H1 (cell line): ENCODE measurements at regions of chr17 and their contacts with region 1.

Region 1: GRCh38 chr17:44829523-44830358 is at the start of gene GJC1:
- DNase-seq: peak in 1 of 2 experiments; percentile 83
- H3K4me3 ChIP-seq: peak within 1 kb of the TSS; percentile 79 to 97 (median 92)
- H3K27ac ChIP-seq: peak within 1 kb of the TSS; percentile 86
- H3K4me1 ChIP-seq: peaks cover 0 to 7% (median 5%) of the 10 kb centered on the region in 4 experiments; a peak in 4 of 7 replicates
- H3K27me3 ChIP-seq: no peaks in the 10 kb centered on the region
- CTCF ChIP-seq: no peak
- EP300 ChIP-seq: no peak
- POLR2A ChIP-seq: peak; percentile 44 to 51
- RAD21 ChIP-seq: no peak
- total RNA-seq, gene GJC1: 154 and 156 TPM in 2 replicates

Region 2: DNA sequence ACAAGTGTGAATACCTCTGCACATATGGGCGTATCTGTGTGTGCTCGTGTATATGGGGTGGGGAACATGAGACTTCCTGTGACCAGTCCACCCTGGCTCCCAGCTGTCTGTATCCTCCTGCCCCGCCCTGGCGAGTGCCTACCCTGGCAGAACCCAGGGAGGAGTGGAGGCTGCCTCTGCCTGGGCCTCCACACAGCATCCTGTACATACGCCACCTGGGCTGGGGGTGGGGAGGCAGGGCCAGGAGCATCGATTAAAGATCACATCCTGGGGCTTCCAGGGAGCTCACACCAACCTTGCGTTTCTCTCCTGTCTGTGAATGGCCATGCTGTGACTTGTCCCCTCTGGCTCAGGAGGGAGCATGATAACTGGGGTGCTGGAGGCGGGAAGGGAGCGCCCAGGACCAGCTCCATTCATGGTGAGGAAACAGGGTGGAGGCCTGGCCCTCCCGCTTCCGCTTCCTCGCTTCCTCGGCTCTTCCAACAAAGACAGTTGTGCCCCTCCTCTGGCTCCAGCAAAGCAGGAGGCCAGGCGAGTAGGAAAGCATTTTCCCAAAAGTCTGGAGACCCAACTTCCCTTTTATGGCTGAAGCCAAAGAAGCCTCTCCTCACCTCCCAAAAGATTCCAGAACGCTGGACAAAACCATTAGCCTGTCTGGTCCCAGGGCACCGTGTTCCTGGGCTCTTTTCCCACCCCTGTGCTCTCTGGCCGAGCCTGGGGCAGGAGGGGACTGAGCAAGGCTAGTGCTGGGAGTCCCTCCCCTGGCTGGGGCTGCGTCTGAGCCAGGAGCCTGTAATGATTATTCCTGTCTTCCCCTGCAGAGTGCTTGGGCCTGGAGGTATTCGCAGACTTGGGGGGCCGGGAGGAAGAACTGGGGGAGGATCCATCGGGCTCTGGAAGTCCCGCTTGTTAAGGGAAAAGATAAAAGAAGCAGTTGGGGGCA is 47.9 kb before region 1 on chr17:
- CTCF ChIA-PET with region 1: interaction called, 35 read pairs
- POLR2A ChIA-PET with region 1: interaction called, 6 read pairs
- DNase-seq: no peak
- H3K4me3 ChIP-seq: no peak overlapping the region
- H3K27ac ChIP-seq: no peak overlapping the region
- H3K4me1 ChIP-seq: peaks cover 0 to 23% (median 17%) of the 10 kb centered on the region in 4 experiments; a peak in 6 of 7 replicates
- H3K27me3 ChIP-seq: peaks cover 0 to 9% (median 5%) of the 10 kb centered on the region in 4 experiments; a peak in 5 of 7 replicates
- CTCF ChIP-seq: no peak
- EP300 ChIP-seq: no peak
- POLR2A ChIP-seq: no peak
- RAD21 ChIP-seq: no peak

Region 3: DNA sequence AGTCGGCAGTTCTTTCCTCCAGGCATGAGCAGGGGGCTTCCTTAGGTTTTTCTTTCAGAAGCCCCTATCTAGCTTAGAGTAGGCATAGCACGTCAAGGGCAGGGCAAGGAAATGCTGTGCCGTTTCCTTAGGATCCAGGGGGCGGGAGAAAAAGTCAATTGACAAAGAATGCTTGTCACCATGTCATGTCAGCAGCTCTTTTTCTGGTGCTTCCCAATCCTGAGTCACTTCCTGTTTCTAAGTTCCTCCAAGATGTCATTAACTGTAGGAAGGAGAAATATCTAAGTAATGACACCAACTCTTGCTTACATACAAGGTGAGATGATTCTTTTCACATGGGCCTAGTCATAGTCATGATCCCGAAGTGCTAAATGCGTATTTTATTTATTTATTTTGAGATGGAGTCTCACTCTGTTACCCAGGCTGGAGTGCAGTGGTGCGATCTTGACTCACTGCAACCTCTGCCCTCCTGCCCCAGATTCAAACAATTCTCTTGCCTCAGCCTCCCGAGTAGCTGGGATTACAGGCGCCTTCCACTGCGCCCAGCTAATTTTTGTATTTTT is 34.8 kb before region 1 on chr17:
- CTCF ChIA-PET with region 1: interaction called, 8 read pairs
- POLR2A ChIA-PET with region 1: interaction called, 11 read pairs
- DNase-seq: no peak
- H3K4me3 ChIP-seq: no peak overlapping the region
- H3K27ac ChIP-seq: no peak overlapping the region
- H3K4me1 ChIP-seq: peaks cover 0 to 3% (median 1%) of the 10 kb centered on the region in 4 experiments; a peak in 2 of 7 replicates
- H3K27me3 ChIP-seq: no peaks in the 10 kb centered on the region
- CTCF ChIP-seq: no peak
- EP300 ChIP-seq: no peak
- POLR2A ChIP-seq: no peak
- RAD21 ChIP-seq: no peak

Region 4: DNA sequence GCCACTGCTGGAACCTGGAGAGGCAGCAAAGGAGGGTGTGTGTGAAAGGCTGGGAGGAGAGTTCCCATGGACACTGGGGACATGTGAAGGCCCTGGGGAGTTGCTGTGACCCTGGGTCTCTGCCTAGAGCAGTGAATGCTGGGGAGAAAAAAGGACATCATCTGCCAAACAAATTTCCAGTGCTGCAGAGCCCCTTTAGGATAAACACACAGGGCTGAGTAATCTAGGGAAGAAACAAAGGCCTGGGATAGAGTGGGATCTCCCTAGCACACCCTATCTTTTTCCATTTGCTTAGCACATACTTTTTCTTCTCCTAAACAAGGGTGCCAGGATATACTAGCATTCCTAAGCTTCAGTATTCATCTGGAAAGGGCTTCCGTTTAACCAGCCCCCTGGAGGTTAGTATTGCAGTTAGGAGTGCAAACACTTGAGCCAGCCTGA is 14.7 kb after region 1 on chr17:
- CTCF ChIA-PET with region 1: interaction called, 44 read pairs
- POLR2A ChIA-PET with region 1: interaction called, 58 read pairs
- DNase-seq: no peak
- H3K4me3 ChIP-seq: no peak overlapping the region
- H3K27ac ChIP-seq: no peak overlapping the region
- H3K4me1 ChIP-seq: peaks cover 6 to 22% (median 11%) of the 10 kb centered on the region in 4 experiments
- H3K27me3 ChIP-seq: no peaks in the 10 kb centered on the region
- CTCF ChIP-seq: peak in 1 of 3 experiments; percentile 14; a peak in 1 of 4 replicates
- EP300 ChIP-seq: no peak
- POLR2A ChIP-seq: no peak
- RAD21 ChIP-seq: peak in 1 of 2 experiments; percentile 25; a peak in 1 of 4 replicates

Region 5: GRCh38 chr17:44887971-44888954 is 58.5 kb after region 1 on chr17:
- CTCF ChIA-PET with region 1: no interaction called
- POLR2A ChIA-PET with region 1: no interaction called
- DNase-seq: no peak
- H3K4me3 ChIP-seq: no peak overlapping the region
- H3K27ac ChIP-seq: no peak overlapping the region
- H3K4me1 ChIP-seq: no peaks in the 10 kb centered on the region
- H3K27me3 ChIP-seq: no peaks in the 10 kb centered on the region
- CTCF ChIP-seq: no peak
- EP300 ChIP-seq: no peak
- POLR2A ChIP-seq: no peak
- RAD21 ChIP-seq: no peak